Lower leg skin (tissue), 4 donors: ENCODE measurements at regions of chr17 and their contacts with region 1.

Region 1: GRCh38 chr17:35312790-35313711 is 60.4 kb downstream of the SLFN11 start:
- DNase-seq: peak; percentile 37 to 88
- H3K4me3 ChIP-seq: no peak overlapping the region
- CTCF ChIP-seq: peak in 1 of 3 donors; percentile 24
- POLR2A ChIP-seq: no peak

Region 2: GRCh38 chr17:35170968-35171771 is 141.9 kb before region 1 on chr17:
- intact Hi-C with region 1: loop called (anchors 10 kb)
- DNase-seq: peak in 1 of 2 donors; percentile 83
- H3K4me3 ChIP-seq: no peak overlapping the region
- CTCF ChIP-seq: no peak
- POLR2A ChIP-seq: no peak

Region 3: DNA sequence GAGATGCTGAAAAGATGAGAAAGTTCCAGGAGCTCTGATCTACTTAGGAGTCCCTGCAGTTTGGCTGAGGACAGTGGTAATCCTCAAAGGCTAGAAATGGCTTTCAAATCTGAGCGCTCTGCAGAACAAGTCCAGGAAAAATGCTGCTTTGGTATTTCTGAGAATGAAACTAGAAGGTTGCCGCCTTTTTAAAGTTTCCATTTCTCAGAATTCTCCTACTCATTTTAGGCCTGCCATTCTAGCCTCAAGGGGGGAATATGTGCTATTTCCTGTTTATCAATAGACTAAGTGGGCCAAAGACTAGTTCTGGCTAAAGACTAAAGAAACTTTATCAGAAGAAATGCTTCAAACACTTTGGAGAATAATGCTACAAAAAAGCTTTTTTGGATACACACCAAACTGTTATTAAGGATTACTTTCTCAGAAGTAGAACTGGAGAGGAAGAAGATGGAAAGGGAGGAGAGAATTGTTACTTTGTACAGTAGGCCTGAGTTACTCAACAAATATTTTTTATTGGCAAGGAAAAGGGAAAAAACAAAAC is 224.6 kb after region 1 on chr17 and contains the start of gene SLFN12L:
- intact Hi-C with region 1: loop called (anchors 5 kb)
- DNase-seq: no peak
- H3K4me3 ChIP-seq: no peak within 1 kb of the TSS
- CTCF ChIP-seq: no peak
- POLR2A ChIP-seq: no peak
- total RNA-seq, gene SLFN12L: 0.12 to 0.80 (median 0.46) TPM